ENCODE measurements at regions of chr7 and their contacts with region 1.

Region 1: GRCh38 chr7:112946350-112946749 is 140.3 kb downstream of the GPR85 start:
- DNase-seq: no peak
- ATAC-seq: no peak
- H3K4me3 ChIP-seq: no peak overlapping the region
- H3K4me3 Mint-ChIP-seq: no peak overlapping the region
- H3K27ac ChIP-seq: no peak overlapping the region
- H3K27ac Mint-ChIP-seq: no peak overlapping the region
- H3K4me1 ChIP-seq: no peaks in the 10 kb centered on the region
- H3K4me1 Mint-ChIP-seq: no peaks in the 10 kb centered on the region
- H3K27me3 ChIP-seq: peaks cover 0 to 12% (median 3%) of the 10 kb centered on the region in 4 experiments
- H3K27me3 Mint-ChIP-seq: peaks cover 43% of the 10 kb centered on the region
- CTCF ChIP-seq: no peak

Region 2: DNA sequence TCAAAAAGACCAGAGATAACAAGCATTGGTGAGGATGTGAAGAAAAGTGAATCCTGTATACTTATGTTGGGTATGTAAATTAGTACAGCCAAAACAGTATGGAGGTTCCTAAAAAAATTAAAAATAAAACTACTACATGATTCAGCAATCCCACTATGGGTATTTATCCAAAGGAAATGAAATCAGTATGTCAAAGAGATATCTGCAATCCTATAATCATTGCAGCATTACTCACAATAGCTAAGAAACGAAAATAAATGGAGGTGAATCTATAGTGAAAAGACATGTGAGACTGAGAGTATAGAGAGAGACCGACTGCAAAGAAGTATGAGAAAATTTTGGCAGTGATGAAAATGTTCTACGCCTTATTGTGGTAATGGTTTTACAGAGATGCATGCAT is 16.9 kb before region 1 on chr7:
- CTCF ChIA-PET with region 1: no interaction called
- POLR2A ChIA-PET with region 1: no interaction called
- intact Hi-C with region 1: loop called (anchors 2 kb)
- DNase-seq: no peak
- ATAC-seq: no peak
- H3K4me3 ChIP-seq: no peak overlapping the region
- H3K4me3 Mint-ChIP-seq: no peak overlapping the region
- H3K27ac ChIP-seq: no peak overlapping the region
- H3K27ac Mint-ChIP-seq: no peak overlapping the region
- H3K4me1 ChIP-seq: no peaks in the 10 kb centered on the region
- H3K4me1 Mint-ChIP-seq: peaks cover 17% of the 10 kb centered on the region
- H3K27me3 ChIP-seq: no peaks in the 10 kb centered on the region
- H3K27me3 Mint-ChIP-seq: no peaks in the 10 kb centered on the region
- CTCF ChIP-seq: no peak

Measured in B cell (primary cell).